Pancreas (tissue), 10 donors: ENCODE measurements at regions of chr2 and their contacts with region 1.

Region 1: DNA sequence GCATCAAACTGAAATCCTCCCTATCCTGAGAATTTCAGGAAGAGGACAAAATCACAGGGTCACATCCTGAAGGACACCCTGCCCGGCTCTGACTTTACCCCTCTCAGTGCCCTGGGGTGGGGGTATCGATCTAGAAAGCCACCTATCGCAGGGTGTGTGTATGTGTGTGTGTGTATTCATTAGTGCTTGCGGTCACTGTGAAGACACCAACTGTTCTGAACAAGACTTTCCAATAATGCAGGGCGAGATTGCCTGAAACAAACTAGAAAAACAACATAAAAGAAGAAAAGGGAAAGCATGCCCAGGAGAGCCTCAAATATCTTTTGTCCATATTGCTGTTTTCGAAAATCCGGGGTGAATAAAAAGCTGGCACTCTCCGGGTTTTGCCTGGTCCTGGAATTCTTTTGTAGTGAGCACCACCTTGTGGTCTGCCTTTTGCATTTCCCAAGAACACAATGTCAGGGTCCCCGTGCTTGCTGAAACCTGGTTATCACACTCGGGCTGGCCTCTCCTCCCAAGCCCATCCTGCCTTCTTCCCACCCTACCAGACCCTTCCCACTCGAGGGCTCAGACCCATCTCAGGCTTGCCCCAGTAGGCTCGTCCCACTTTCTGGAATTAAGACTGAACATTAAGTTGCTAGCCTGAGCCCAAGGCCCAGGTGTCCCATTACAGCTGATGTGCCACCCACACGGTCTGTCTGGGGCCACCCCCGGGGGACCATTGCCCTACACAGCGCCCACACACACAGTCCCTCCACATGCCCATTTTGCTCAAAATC is 25.0 kb upstream of the COPS8 start:
- DNase-seq: peak in 3 of 6 donors; percentile 37 to 66 (median 40)
- ATAC-seq: peak; percentile 85 to 95 (median 94)
- H3K4me3 ChIP-seq: peak overlapping the region in 1 of 4 donors; percentile 14
- H3K27ac ChIP-seq: no peak overlapping the region
- H3K4me1 ChIP-seq: peaks cover 0 to 5% (median 3%) of the 10 kb centered on the region in 3 donors
- H3K27me3 ChIP-seq: no peaks in the 10 kb centered on the region
- CTCF ChIP-seq: peak; percentile 20 to 41 (median 34)

Region 2: GRCh38 chr2:236343400-236344161 is 717.1 kb before region 1 on chr2:
- intact Hi-C with region 1: loop called in 1 of 3 experiments (anchors 10 kb)
- DNase-seq: peak in 3 of 6 donors; percentile 29 to 62 (median 48)
- ATAC-seq: peak in 3 of 4 donors; percentile 60 to 79 (median 66)
- H3K4me3 ChIP-seq: no peak overlapping the region
- H3K27ac ChIP-seq: no peak overlapping the region
- H3K4me1 ChIP-seq: no peaks in the 10 kb centered on the region
- H3K27me3 ChIP-seq: no peaks in the 10 kb centered on the region
- CTCF ChIP-seq: peak; percentile 57 to 77 (median 74)

Region 3: GRCh38 chr2:236352761-236353593 is 707.7 kb before region 1 on chr2:
- intact Hi-C with region 1: loop called (anchors 5 to 10 kb)
- DNase-seq: peak in 1 of 6 donors; percentile 27
- ATAC-seq: peak in 3 of 4 donors; percentile 69 to 77 (median 70)
- H3K4me3 ChIP-seq: no peak overlapping the region
- H3K27ac ChIP-seq: no peak overlapping the region
- H3K4me1 ChIP-seq: no peaks in the 10 kb centered on the region
- H3K27me3 ChIP-seq: no peaks in the 10 kb centered on the region
- CTCF ChIP-seq: peak; percentile 22 to 74 (median 70)

Region 4: GRCh38 chr2:237291138-237291792 is 230.5 kb after region 1 on chr2:
- intact Hi-C with region 1: no loop called
- DNase-seq: peak; percentile 78 to 89 (median 82)
- ATAC-seq: peak; percentile 91 to 94 (median 92)
- H3K4me3 ChIP-seq: peak overlapping the region in 2 of 4 donors; percentile 6 to 8
- H3K27ac ChIP-seq: peak overlapping the region in 2 of 4 donors; percentile 24 to 55
- H3K4me1 ChIP-seq: peaks cover 4 to 15% (median 12%) of the 10 kb centered on the region in 3 donors
- H3K27me3 ChIP-seq: peaks cover 0 to 18% (median 1%) of the 10 kb centered on the region in 4 donors
- CTCF ChIP-seq: no peak